ENCODE measurements at regions of chr16 and their contacts with region 1.

Region 1: GRCh38 chr16:11407047-11407982 is 62.1 kb downstream of the RMI2 start:
- DNase-seq: peak; percentile 74
- H3K4me3 ChIP-seq: no peak overlapping the region
- H3K27ac ChIP-seq: no peak overlapping the region
- H3K4me1 ChIP-seq: no peaks in the 10 kb centered on the region
- H3K27me3 ChIP-seq: no peaks in the 10 kb centered on the region
- CTCF ChIP-seq: peak; percentile 68 to 78
- POLR2A ChIP-seq: no peak

Region 2: GRCh38 chr16:11114366-11115164 is 292.8 kb before region 1 on chr16:
- CTCF ChIA-PET with region 1: no interaction called
- POLR2A ChIA-PET with region 1: no interaction called
- dilution Hi-C with region 1: no loop called
- intact Hi-C with region 1: no loop called
- DNase-seq: no peak
- H3K4me3 ChIP-seq: no peak overlapping the region
- H3K27ac ChIP-seq: no peak overlapping the region
- H3K4me1 ChIP-seq: no peaks in the 10 kb centered on the region
- H3K27me3 ChIP-seq: no peaks in the 10 kb centered on the region
- CTCF ChIP-seq: no peak
- POLR2A ChIP-seq: no peak

Region 3: DNA sequence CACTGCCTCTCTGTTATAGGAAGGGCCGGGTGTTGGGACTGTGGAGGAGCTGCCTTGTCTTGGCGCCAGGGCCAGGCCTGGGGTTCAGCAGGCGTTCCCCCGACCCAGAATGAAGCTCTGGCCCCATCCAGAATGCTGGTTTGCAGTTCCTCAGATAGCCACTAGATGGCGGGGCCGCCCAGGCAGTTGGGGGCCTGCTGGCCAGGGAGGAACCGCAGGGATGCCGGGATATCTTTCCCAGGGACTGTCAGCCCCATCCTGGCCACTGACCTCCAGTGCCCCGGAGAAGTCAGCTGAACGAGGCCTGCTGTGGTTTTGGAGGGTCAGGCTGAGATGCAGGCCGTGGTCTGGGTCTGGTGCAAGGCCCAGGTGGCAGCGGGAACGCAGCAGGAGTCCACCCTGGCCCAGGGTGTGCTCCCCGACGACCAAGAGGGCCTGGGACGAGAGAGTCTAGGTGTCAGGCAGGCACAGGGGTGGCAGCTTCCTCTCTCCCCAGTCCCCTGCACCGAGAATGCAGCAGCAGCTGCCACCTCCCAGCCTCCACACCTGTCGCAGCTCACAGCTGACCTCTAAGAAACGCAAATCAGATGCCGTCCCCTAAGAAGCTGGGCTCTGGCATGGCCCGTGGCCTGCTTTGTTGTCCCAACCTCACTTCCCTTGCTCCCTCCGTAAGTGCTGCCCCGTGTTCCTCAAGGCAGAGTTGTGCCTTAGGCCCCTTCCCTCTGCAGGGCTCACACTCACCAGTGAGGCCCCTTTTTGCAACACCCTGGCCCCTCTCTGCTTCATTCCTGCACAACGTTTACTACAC is 10.9 kb before region 1 on chr16:
- CTCF ChIA-PET with region 1: interaction called, 38 read pairs
- POLR2A ChIA-PET with region 1: no interaction called
- dilution Hi-C with region 1: no loop called
- intact Hi-C with region 1: no loop called
- DNase-seq: peak; percentile 39
- H3K4me3 ChIP-seq: no peak overlapping the region
- H3K27ac ChIP-seq: no peak overlapping the region
- H3K4me1 ChIP-seq: no peaks in the 10 kb centered on the region
- H3K27me3 ChIP-seq: no peaks in the 10 kb centered on the region
- CTCF ChIP-seq: peak; percentile 95 to 96
- POLR2A ChIP-seq: no peak

Region 4: GRCh38 chr16:11497851-11498289 is 90.6 kb after region 1 on chr16:
- CTCF ChIA-PET with region 1: interaction called, 9 read pairs
- POLR2A ChIA-PET with region 1: no interaction called
- dilution Hi-C with region 1: no loop called
- intact Hi-C with region 1: loop called (anchors 1 kb)
- DNase-seq: peak; percentile 44
- H3K4me3 ChIP-seq: no peak overlapping the region
- H3K27ac ChIP-seq: peak overlapping the region; percentile 52
- H3K4me1 ChIP-seq: peaks cover 35% of the 10 kb centered on the region
- H3K27me3 ChIP-seq: no peaks in the 10 kb centered on the region
- CTCF ChIP-seq: no peak
- POLR2A ChIP-seq: no peak

Region 5: GRCh38 chr16:11511801-11512200 is 104.5 kb after region 1 on chr16:
- CTCF ChIA-PET with region 1: no interaction called
- POLR2A ChIA-PET with region 1: no interaction called
- dilution Hi-C with region 1: no loop called
- intact Hi-C with region 1: no loop called
- DNase-seq: no peak
- H3K4me3 ChIP-seq: no peak overlapping the region
- H3K27ac ChIP-seq: no peak overlapping the region
- H3K4me1 ChIP-seq: no peaks in the 10 kb centered on the region
- H3K27me3 ChIP-seq: no peaks in the 10 kb centered on the region
- CTCF ChIP-seq: no peak
- POLR2A ChIP-seq: no peak

Region 6: GRCh38 chr16:11530171-11530940 is 123.0 kb after region 1 on chr16:
- CTCF ChIA-PET with region 1: interaction called, 108 read pairs
- POLR2A ChIA-PET with region 1: interaction called, 8 read pairs
- dilution Hi-C with region 1: no loop called
- intact Hi-C with region 1: loop called (anchors 1 kb)
- DNase-seq: peak; percentile 56
- H3K4me3 ChIP-seq: no peak overlapping the region
- H3K27ac ChIP-seq: no peak overlapping the region
- H3K4me1 ChIP-seq: peaks cover 9% of the 10 kb centered on the region
- H3K27me3 ChIP-seq: peaks cover 3 to 5% of the 10 kb centered on the region in 2 experiments
- CTCF ChIP-seq: no peak
- POLR2A ChIP-seq: no peak

Region 7: GRCh38 chr16:11639925-11640899 is 232.9 kb after region 1 on chr16:
- CTCF ChIA-PET with region 1: interaction called, 64 read pairs
- POLR2A ChIA-PET with region 1: no interaction called
- dilution Hi-C with region 1: no loop called
- intact Hi-C with region 1: loop called (anchors 1 kb)
- DNase-seq: peak; percentile 18
- H3K4me3 ChIP-seq: no peak overlapping the region
- H3K27ac ChIP-seq: no peak overlapping the region
- H3K4me1 ChIP-seq: peaks cover 3% of the 10 kb centered on the region
- H3K27me3 ChIP-seq: peaks cover 2% of the 10 kb centered on the region in 2 experiments
- CTCF ChIP-seq: no peak
- POLR2A ChIP-seq: no peak

Region 8: GRCh38 chr16:11715246-11715947 is 308.1 kb after region 1 on chr16:
- CTCF ChIA-PET with region 1: interaction called, 67 read pairs
- POLR2A ChIA-PET with region 1: no interaction called
- dilution Hi-C with region 1: no loop called
- intact Hi-C with region 1: no loop called
- DNase-seq: no peak
- H3K4me3 ChIP-seq: no peak overlapping the region
- H3K27ac ChIP-seq: no peak overlapping the region
- H3K4me1 ChIP-seq: no peaks in the 10 kb centered on the region
- H3K27me3 ChIP-seq: no peaks in the 10 kb centered on the region
- CTCF ChIP-seq: no peak
- POLR2A ChIP-seq: no peak

Measured in endothelial cell of umbilical vein (primary cell).